Right lobe of liver (tissue), 6 donors: ENCODE measurements at regions of chr12 and their contacts with region 1.

Region 1: GRCh38 chr12:124675881-124676715 is 108.7 kb upstream of the NCOR2 start:
- DNase-seq: no peak
- ATAC-seq: no peak
- H3K4me3 ChIP-seq: no peak overlapping the region
- H3K27ac ChIP-seq: peak overlapping the region in 1 of 3 donors; percentile 12
- H3K4me1 ChIP-seq: peaks cover 0 to 38% (median 18%) of the 10 kb centered on the region in 4 donors
- H3K27me3 ChIP-seq: no peaks in the 10 kb centered on the region
- CTCF ChIP-seq: no peak
- POLR2A ChIP-seq: no peak

Region 2: DNA sequence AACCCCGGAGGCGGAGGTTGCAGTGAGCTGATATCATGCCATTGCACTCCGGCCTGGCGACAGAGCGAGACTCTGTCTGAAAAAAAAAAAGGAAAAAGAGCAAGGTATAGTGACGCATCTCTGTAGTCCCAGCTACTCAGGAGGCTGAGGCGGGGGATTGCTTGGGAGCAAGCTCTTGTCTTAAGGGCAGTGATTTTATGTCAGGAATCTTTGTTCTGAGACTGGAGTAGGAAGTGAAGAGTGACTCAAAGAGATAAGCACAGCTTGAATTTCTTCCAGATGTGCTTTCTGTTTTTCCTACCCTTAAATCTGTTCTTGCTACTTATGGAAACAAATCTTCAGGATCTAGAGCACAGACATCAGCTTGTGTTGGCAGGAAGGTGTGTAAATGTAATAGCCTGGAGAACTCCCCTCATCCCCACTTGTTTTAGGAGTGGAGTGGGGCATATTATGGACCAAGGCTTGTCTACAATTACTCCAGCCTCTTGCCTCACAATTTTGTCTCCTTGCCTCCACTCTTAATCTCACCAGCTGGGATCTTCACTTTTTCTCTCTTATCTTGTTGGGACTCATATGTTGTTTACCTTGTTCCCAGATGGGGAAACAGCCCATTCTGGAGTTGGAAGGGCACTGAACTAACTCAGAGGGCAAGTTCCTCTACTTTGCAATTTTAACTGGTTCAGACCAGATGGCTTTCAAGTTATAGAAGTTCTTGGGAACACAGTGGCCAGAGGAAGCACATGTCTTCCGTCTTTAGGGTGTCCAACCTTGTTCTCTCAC is 1084.2 kb before region 1 on chr12:
- intact Hi-C with region 1: no loop called
- DNase-seq: peak in 1 of 3 donors; percentile 25
- ATAC-seq: peak; percentile 43 to 86 (median 54)
- H3K4me3 ChIP-seq: no peak overlapping the region
- H3K27ac ChIP-seq: peak overlapping the region in 1 of 3 donors; percentile 57
- H3K4me1 ChIP-seq: peaks cover 0 to 60% (median 18%) of the 10 kb centered on the region in 4 donors
- H3K27me3 ChIP-seq: no peaks in the 10 kb centered on the region
- CTCF ChIP-seq: no peak
- POLR2A ChIP-seq: no peak

Region 3: GRCh38 chr12:124493809-124494750 is 182.0 kb before region 1 on chr12:
- intact Hi-C with region 1: no loop called
- DNase-seq: no peak
- ATAC-seq: no peak
- H3K4me3 ChIP-seq: no peak overlapping the region
- H3K27ac ChIP-seq: peak overlapping the region in 1 of 3 donors; percentile 74
- H3K4me1 ChIP-seq: peaks cover 0 to 59% (median 19%) of the 10 kb centered on the region in 4 donors
- H3K27me3 ChIP-seq: no peaks in the 10 kb centered on the region
- CTCF ChIP-seq: no peak
- POLR2A ChIP-seq: no peak

Region 4: GRCh38 chr12:124578445-124578844 is 97.7 kb before region 1 on chr12:
- intact Hi-C with region 1: loop called in 1 of 2 experiments (anchors 10 kb)
- DNase-seq: no peak
- ATAC-seq: no peak
- H3K4me3 ChIP-seq: no peak overlapping the region
- H3K27ac ChIP-seq: no peak overlapping the region
- H3K4me1 ChIP-seq: no peaks in the 10 kb centered on the region
- H3K27me3 ChIP-seq: no peaks in the 10 kb centered on the region
- CTCF ChIP-seq: no peak
- POLR2A ChIP-seq: no peak